ENCODE measurements at regions of chr19 and their contacts with region 1.

Region 1: DNA sequence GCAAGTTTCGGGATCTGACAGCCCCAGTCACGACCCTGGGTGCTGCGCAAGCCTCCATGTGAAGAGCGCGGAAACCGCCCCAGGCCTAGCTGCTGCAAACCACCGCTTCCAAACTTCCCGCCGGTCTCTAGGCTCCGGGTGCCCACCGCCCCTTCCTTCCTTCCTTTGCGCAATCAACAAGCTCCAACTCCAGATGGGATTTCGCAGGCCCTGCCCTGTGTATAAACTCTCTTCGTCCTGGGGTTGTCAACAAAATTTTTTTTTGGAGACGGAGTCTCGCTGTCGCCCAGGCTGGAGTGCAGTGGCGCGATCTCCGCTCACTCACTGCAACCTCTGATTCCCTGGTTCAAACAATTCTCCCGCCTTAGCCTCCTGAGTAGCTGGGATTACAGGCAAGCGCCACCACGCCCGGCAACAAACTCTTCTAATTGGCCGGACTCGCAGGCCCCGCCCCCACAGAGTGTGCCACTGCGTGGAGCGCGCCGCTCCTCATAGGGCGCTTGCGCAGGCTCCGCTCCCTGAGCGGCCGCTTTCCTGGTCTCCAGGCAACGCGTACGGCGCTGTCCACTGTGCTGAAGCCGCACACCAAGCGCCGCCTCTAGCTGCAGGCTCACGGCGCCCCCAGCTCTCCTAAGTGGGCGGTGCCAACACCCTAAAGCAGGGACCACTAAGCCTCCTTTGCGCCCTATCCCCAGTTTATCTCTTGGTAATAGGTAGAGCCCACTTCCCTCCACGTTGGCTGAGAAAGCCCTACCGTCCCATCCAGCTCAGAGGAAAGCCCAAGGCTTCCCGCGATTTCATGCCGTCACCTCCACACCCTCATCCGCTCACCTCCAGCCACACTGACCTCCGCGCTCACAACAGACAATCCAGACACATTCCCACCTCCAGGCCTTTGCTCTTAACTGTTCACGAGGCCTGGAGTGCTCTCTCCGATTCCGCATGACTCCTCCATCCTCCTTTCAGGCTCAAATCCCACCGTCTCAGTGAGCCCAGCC is 5.5 kb upstream of the QTRT1 start:
- DNase-seq: peak; percentile 45
- ATAC-seq: peak; percentile 97
- H3K4me3 ChIP-seq: no peak overlapping the region
- H3K27ac ChIP-seq: no peak overlapping the region
- H3K4me1 ChIP-seq: no peaks in the 10 kb centered on the region
- H3K27me3 ChIP-seq: no peaks in the 10 kb centered on the region
- CTCF ChIP-seq: no peak
- EP300 ChIP-seq: no peak
- POLR2A ChIP-seq: no peak
- RAD21 ChIP-seq: no peak

Region 2: GRCh38 chr19:9865732-9866501 is 829.8 kb before region 1 on chr19:
- CTCF ChIA-PET with region 1: no interaction called
- POLR2A ChIA-PET with region 1: no interaction called
- RAD21 ChIA-PET with region 1: no interaction called
- SMC1A ChIA-PET with region 1: no interaction called
- in situ Hi-C with region 1: no loop called
- intact Hi-C with region 1: no loop called
- DNase-seq: no peak
- ATAC-seq: peak; percentile 46
- H3K4me3 ChIP-seq: no peak overlapping the region
- H3K27ac ChIP-seq: no peak overlapping the region
- H3K4me1 ChIP-seq: no peaks in the 10 kb centered on the region
- H3K27me3 ChIP-seq: no peaks in the 10 kb centered on the region
- CTCF ChIP-seq: no peak
- EP300 ChIP-seq: no peak
- POLR2A ChIP-seq: no peak
- RAD21 ChIP-seq: no peak

Region 3: GRCh38 chr19:10478903-10479384 is 216.8 kb before region 1 on chr19:
- CTCF ChIA-PET with region 1: interaction called, 19 read pairs
- POLR2A ChIA-PET with region 1: no interaction called
- RAD21 ChIA-PET with region 1: interaction called, 10 read pairs
- SMC1A ChIA-PET with region 1: interaction called, 9 read pairs
- in situ Hi-C with region 1: no loop called
- intact Hi-C with region 1: no loop called
- DNase-seq: no peak
- ATAC-seq: peak; percentile 70
- H3K4me3 ChIP-seq: no peak overlapping the region
- H3K27ac ChIP-seq: no peak overlapping the region
- H3K4me1 ChIP-seq: no peaks in the 10 kb centered on the region
- H3K27me3 ChIP-seq: no peaks in the 10 kb centered on the region; a peak in 1 of 4 replicates
- CTCF ChIP-seq: peak; percentile 16 to 56 (median 27); a peak in 5 of 6 replicates
- EP300 ChIP-seq: no peak
- POLR2A ChIP-seq: no peak
- RAD21 ChIP-seq: peak; percentile 10; the same call in 1 of the 2 replicates

Region 4: DNA sequence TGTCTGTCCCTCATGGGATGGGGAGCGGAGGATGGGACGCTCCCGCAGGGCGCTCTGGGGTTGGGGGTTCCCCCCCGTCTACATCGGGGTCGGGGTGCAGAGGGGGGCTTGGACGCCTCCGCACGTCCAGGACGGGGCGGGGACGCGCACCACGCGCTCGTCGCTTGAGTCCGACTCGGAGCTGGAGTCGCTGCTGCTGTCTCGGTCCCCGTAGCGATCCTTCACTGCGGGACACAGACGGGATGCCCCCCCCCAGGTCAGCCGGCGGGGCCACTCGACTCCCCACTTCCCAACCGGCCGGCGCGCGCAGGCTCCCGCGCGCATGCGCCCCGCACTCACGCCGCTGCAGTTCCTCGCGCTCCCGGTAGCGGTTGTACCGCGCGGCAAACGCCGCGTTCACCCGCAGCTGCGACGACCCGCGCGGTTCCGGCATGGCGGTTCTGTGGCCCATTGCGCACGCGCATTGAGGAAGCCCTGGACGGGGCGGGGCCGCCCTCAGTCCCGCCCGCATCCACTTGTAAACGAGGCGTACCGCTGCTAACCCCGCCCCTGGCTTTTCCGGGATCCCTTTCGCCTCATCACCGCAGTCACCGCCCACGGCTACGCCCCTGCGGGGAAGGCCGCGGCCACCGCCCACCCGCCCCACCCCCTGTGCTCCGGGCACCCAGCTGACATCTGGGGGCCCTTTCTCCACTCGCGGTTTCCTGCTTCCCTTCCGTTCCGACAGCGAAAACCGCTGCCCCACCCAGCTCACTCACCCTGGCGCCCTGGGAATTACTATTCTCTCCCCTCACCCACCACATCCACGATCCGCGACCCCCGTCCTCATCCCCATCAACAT is 129.9 kb before region 1 on chr19 and contains the start of gene KRI1:
- CTCF ChIA-PET with region 1: interaction called, 41 read pairs
- POLR2A ChIA-PET with region 1: interaction called, 3 read pairs
- RAD21 ChIA-PET with region 1: interaction called, 4 read pairs
- SMC1A ChIA-PET with region 1: interaction called, 14 read pairs
- in situ Hi-C with region 1: no loop called
- intact Hi-C with region 1: no loop called
- DNase-seq: peak; percentile 88
- ATAC-seq: peak; percentile 69
- H3K4me3 ChIP-seq: peak within 1 kb of the TSS; percentile 80
- H3K27ac ChIP-seq: peak within 1 kb of the TSS; percentile 88
- H3K4me1 ChIP-seq: peaks cover 23% of the 10 kb centered on the region
- H3K27me3 ChIP-seq: no peaks in the 10 kb centered on the region
- CTCF ChIP-seq: peak in 2 of 3 experiments; percentile 5 to 24; a peak in 1 of 6 replicates
- EP300 ChIP-seq: peak in 1 of 2 experiments; percentile 10; a peak in 1 of 4 replicates
- POLR2A ChIP-seq: peak; percentile 93
- RAD21 ChIP-seq: no peak
- polyA plus RNA-seq, gene KRI1: 0.98 to 3.4 TPM

Region 5: GRCh38 chr19:10593820-10594637 is 101.7 kb before region 1 on chr19:
- CTCF ChIA-PET with region 1: interaction called, 4 read pairs
- POLR2A ChIA-PET with region 1: interaction called, 5 read pairs
- RAD21 ChIA-PET with region 1: interaction called, 12 read pairs
- SMC1A ChIA-PET with region 1: interaction called, 3 read pairs
- in situ Hi-C with region 1: no loop called
- intact Hi-C with region 1: no loop called
- DNase-seq: peak; percentile 72
- ATAC-seq: peak; percentile 84
- H3K4me3 ChIP-seq: no peak overlapping the region
- H3K27ac ChIP-seq: no peak overlapping the region
- H3K4me1 ChIP-seq: peaks cover 33% of the 10 kb centered on the region
- H3K27me3 ChIP-seq: no peaks in the 10 kb centered on the region
- CTCF ChIP-seq: no peak
- EP300 ChIP-seq: peak; percentile 38 to 41; a peak in 1 of 4 replicates
- POLR2A ChIP-seq: no peak
- RAD21 ChIP-seq: no peak

Region 6: GRCh38 chr19:10653715-10654492 is 41.8 kb before region 1 on chr19 and contains the start of gene ILF3:
- CTCF ChIA-PET with region 1: interaction called, 50 read pairs
- POLR2A ChIA-PET with region 1: interaction called, 6 read pairs
- RAD21 ChIA-PET with region 1: interaction called, 103 read pairs
- SMC1A ChIA-PET with region 1: interaction called, 9 read pairs
- in situ Hi-C with region 1: no loop called
- intact Hi-C with region 1: no loop called
- DNase-seq: peak; percentile 100
- ATAC-seq: peak; percentile 83
- H3K4me3 ChIP-seq: peak within 1 kb of the TSS; percentile 91
- H3K27ac ChIP-seq: peak within 1 kb of the TSS; percentile 99
- H3K4me1 ChIP-seq: peaks cover 6% of the 10 kb centered on the region
- H3K27me3 ChIP-seq: no peaks in the 10 kb centered on the region
- CTCF ChIP-seq: no peak
- EP300 ChIP-seq: peak; percentile 52 to 54
- POLR2A ChIP-seq: peak; percentile 89
- RAD21 ChIP-seq: no peak
- polyA plus RNA-seq, gene ILF3: 28.1 to 38.1 TPM

Region 7: DNA sequence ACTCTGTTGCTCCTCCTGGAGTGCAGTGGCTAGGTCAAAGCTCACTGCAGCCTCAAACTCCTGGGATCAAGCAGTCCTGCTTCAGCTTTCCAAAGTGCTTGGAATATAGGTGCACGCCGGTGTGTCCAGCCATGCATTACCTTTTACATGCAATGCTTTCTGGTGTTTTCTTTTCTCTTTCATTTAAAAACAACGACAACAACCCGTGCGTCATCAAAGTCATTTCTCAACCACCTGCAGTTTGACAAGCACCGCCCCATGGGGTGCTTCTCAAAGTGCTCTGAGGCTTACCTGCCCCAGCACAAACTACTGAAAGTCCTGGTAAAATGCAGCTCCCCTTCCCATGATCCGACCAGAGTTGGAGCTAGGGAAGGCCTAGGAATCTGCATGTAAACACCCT is 12.6 kb after region 1 on chr19:
- CTCF ChIA-PET with region 1: interaction called, 13 read pairs
- POLR2A ChIA-PET with region 1: no interaction called
- RAD21 ChIA-PET with region 1: no interaction called
- SMC1A ChIA-PET with region 1: no interaction called
- in situ Hi-C with region 1: no loop called
- intact Hi-C with region 1: no loop called
- DNase-seq: no peak
- ATAC-seq: no peak
- H3K4me3 ChIP-seq: no peak overlapping the region
- H3K27ac ChIP-seq: no peak overlapping the region
- H3K4me1 ChIP-seq: no peaks in the 10 kb centered on the region
- H3K27me3 ChIP-seq: no peaks in the 10 kb centered on the region
- CTCF ChIP-seq: no peak
- EP300 ChIP-seq: no peak
- POLR2A ChIP-seq: no peak
- RAD21 ChIP-seq: no peak

Region 8: DNA sequence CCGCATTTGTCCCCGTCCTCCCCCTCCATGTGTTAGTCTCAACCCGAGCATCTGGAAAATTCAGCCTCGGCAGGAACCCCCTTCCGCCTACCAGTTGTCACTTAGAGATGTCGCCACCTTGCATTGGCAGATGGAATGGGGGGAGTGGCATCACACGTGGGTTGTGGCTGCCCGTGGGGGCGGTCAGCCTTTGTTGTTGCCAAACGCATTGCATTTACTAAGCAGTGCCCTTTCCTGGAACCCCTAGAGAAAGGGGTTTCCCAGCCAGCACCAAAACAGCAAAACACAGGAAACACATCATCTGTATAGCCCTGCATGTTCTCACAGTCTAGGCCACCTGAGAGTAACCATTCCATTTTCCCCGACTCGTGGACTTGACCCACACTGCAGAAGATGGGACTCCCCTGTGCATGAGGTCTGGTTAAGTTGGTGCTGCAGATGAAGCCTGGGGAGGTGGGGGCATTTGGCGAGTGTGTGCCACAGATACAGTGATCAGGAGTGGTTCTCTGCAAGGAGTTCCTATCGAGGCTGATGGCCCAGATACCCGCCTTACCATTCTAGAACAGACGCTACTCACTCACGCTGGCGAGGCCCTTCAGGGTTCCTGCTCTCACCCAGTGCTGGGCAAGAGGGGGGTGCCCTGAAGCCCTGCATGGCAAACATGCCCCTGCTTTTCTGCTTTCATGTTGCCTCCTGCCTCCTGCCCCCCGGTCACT is 102.0 kb after region 1 on chr19:
- CTCF ChIA-PET with region 1: no interaction called
- POLR2A ChIA-PET with region 1: no interaction called
- RAD21 ChIA-PET with region 1: no interaction called
- SMC1A ChIA-PET with region 1: no interaction called
- in situ Hi-C with region 1: no loop called
- intact Hi-C with region 1: no loop called
- DNase-seq: peak; percentile 74
- ATAC-seq: peak; percentile 95
- H3K4me3 ChIP-seq: no peak overlapping the region
- H3K27ac ChIP-seq: peak overlapping the region; percentile 46; the same call in 1 of the 2 replicates
- H3K4me1 ChIP-seq: peaks cover 3% of the 10 kb centered on the region
- H3K27me3 ChIP-seq: no peaks in the 10 kb centered on the region
- CTCF ChIP-seq: no peak
- EP300 ChIP-seq: peak; percentile 25 to 49; a peak in 2 of 4 replicates
- POLR2A ChIP-seq: no peak
- RAD21 ChIP-seq: no peak

Region 9: DNA sequence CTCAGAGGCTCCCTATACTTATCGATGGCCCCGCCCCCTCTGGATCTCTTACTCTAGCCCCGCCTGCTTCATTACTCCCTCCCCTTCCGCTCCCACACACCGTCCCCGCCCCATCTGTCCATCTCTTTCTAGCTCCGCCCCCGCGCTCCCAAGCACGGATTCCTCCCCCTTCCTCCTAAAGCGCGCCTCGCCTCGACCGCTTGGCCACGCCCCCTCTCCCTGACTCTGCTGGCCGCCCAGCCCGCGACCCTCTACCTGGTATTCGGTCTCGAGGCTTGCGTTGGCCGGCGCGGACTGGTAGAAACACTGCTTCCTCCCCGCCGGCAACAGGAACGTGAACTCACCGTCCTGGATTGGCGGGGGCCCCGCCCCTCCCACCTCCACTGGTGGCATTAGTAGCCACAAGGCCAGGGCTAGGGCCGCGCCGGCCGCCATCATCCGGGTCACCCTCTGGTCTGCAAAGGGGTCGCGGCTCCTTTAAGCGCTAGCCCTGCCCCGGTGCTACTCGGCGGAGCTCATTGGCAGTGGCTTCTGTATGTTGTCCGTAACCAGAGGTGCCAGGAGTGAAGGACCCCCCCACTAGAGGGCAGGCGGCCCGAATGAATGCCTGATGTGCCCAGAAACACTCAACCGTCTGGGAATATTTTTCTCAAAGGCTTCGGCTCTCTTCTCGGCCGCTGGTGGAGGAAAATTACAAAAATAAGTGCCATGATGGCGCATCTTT is 140.2 kb after region 1 on chr19 and contains the start of gene TMED1:
- CTCF ChIA-PET with region 1: interaction called, 28 read pairs
- POLR2A ChIA-PET with region 1: no interaction called
- RAD21 ChIA-PET with region 1: interaction called, 3 read pairs
- SMC1A ChIA-PET with region 1: no interaction called
- in situ Hi-C with region 1: no loop called
- intact Hi-C with region 1: no loop called
- DNase-seq: peak; percentile 91
- ATAC-seq: peak; percentile 98
- H3K4me3 ChIP-seq: peak within 1 kb of the TSS; percentile 78
- H3K27ac ChIP-seq: peak within 1 kb of the TSS; percentile 89
- H3K4me1 ChIP-seq: peaks cover 12% of the 10 kb centered on the region
- H3K27me3 ChIP-seq: no peaks in the 10 kb centered on the region
- CTCF ChIP-seq: peak in 1 of 3 experiments; percentile 42; a peak in 1 of 6 replicates
- EP300 ChIP-seq: no peak
- POLR2A ChIP-seq: peak; percentile 86
- RAD21 ChIP-seq: no peak
- polyA plus RNA-seq, gene TMED1: 0.60 to 2.8 TPM